Heart right ventricle (tissue), 16 donors: ENCODE measurements at regions of chr3 and their contacts with region 1.

Region 1: GRCh38 chr3:15287565-15288330 is 44.6 kb downstream of the SH3BP5 start:
- DNase-seq: peak in 1 of 2 donors; percentile 50
- ATAC-seq: peak; percentile 60 to 94 (median 81)
- H3K4me3 ChIP-seq: no peak overlapping the region
- H3K27ac ChIP-seq: peak overlapping the region in 9 of 10 donors; percentile 20 to 96 (median 37)
- H3K4me1 ChIP-seq: peaks cover 10 to 76% (median 39%) of the 10 kb centered on the region in 9 donors
- H3K27me3 ChIP-seq: no peaks in the 10 kb centered on the region
- CTCF ChIP-seq: no peak

Region 2: GRCh38 chr3:15332405-15333098 is 44.8 kb after region 1 on chr3 and contains the start of gene SH3BP5:
- intact Hi-C with region 1: loop called in 2 of 10 experiments (anchors 5 kb)
- DNase-seq: peak; percentile 69 to 76
- ATAC-seq: peak; percentile 86 to 93 (median 90)
- H3K4me3 ChIP-seq: peak within 1 kb of the TSS; percentile 68 to 98 (median 85)
- H3K27ac ChIP-seq: peak within 1 kb of the TSS in 9 of 10 donors; percentile 69 to 97 (median 87)
- H3K4me1 ChIP-seq: peaks cover 0 to 51% (median 43%) of the 10 kb centered on the region in 9 donors
- H3K27me3 ChIP-seq: no peaks in the 10 kb centered on the region
- CTCF ChIP-seq: peak; percentile 63 to 95 (median 81)
- total RNA-seq, gene SH3BP5: 6.7 to 22.4 (median 9.4) TPM